Heart right ventricle (tissue), 16 donors: ENCODE measurements at regions of chr11 and their contacts with region 1.

Region 1: GRCh38 chr11:6844357-6844756 is 1.1 kb upstream of the OR10A5 start:
- DNase-seq: no peak
- ATAC-seq: no peak
- H3K4me3 ChIP-seq: no peak overlapping the region
- H3K27ac ChIP-seq: no peak overlapping the region
- H3K4me1 ChIP-seq: no peaks in the 10 kb centered on the region
- H3K27me3 ChIP-seq: no peaks in the 10 kb centered on the region
- CTCF ChIP-seq: no peak

Region 2: DNA sequence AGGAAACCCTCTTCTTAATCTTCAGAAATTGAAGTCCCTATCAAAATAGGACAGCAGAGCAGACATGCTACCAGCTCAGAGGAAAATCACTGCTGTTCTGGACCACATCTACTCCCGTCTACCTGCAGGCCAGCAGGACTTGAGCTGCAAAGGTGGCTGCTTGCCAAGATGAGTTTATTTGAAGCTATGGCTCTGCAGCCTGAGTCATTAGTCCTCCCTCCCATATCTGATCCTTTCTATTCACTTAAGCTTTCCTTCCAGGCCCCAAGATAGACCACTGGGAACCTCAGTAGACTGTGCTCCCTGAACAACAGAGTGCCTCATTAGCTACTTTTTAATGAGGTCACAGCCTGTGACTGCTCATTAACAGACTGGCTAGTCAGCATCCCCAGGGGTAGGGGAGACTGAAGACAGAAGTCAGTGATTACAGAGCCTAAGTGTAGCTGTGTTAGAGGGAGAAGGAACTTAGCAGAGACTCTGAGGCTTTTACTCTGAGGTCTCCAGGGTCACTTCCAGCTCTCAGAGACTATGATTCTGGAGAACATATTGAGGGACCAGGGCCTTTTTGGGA is 11.7 kb after region 1 on chr11:
- intact Hi-C with region 1: loop called in 1 of 10 experiments (anchors 2 kb)
- DNase-seq: no peak
- ATAC-seq: no peak
- H3K4me3 ChIP-seq: no peak overlapping the region
- H3K27ac ChIP-seq: no peak overlapping the region
- H3K4me1 ChIP-seq: no peaks in the 10 kb centered on the region
- H3K27me3 ChIP-seq: no peaks in the 10 kb centered on the region
- CTCF ChIP-seq: no peak